B cell (primary cell): ENCODE measurements at regions of chr14 and their contacts with region 1.

Region 1: GRCh38 chr14:37150414-37150813 is 22.0 kb downstream of the SLC25A21 start:
- DNase-seq: no peak
- ATAC-seq: no peak
- H3K4me3 ChIP-seq: no peak overlapping the region
- H3K4me3 Mint-ChIP-seq: no peak overlapping the region
- H3K27ac ChIP-seq: no peak overlapping the region
- H3K27ac Mint-ChIP-seq: no peak overlapping the region
- H3K4me1 ChIP-seq: no peaks in the 10 kb centered on the region
- H3K4me1 Mint-ChIP-seq: no peaks in the 10 kb centered on the region
- H3K27me3 ChIP-seq: no peaks in the 10 kb centered on the region
- H3K27me3 Mint-ChIP-seq: no peaks in the 10 kb centered on the region
- CTCF ChIP-seq: peak; percentile 41

Region 2: GRCh38 chr14:36852981-36853691 is 297.3 kb before region 1 on chr14:
- CTCF ChIA-PET with region 1: no interaction called
- POLR2A ChIA-PET with region 1: no interaction called
- intact Hi-C with region 1: no loop called
- DNase-seq: no peak
- ATAC-seq: no peak
- H3K4me3 ChIP-seq: no peak overlapping the region
- H3K4me3 Mint-ChIP-seq: no peak overlapping the region
- H3K27ac ChIP-seq: no peak overlapping the region
- H3K27ac Mint-ChIP-seq: no peak overlapping the region
- H3K4me1 ChIP-seq: no peaks in the 10 kb centered on the region
- H3K4me1 Mint-ChIP-seq: no peaks in the 10 kb centered on the region
- H3K27me3 ChIP-seq: no peaks in the 10 kb centered on the region
- H3K27me3 Mint-ChIP-seq: no peaks in the 10 kb centered on the region
- CTCF ChIP-seq: no peak

Region 3: GRCh38 chr14:37139710-37140109 is 10.7 kb before region 1 on chr14:
- CTCF ChIA-PET with region 1: interaction called, 11 read pairs
- POLR2A ChIA-PET with region 1: no interaction called
- intact Hi-C with region 1: no loop called
- DNase-seq: no peak
- ATAC-seq: no peak
- H3K4me3 ChIP-seq: no peak overlapping the region
- H3K4me3 Mint-ChIP-seq: no peak overlapping the region
- H3K27ac ChIP-seq: no peak overlapping the region
- H3K27ac Mint-ChIP-seq: no peak overlapping the region
- H3K4me1 ChIP-seq: no peaks in the 10 kb centered on the region
- H3K4me1 Mint-ChIP-seq: no peaks in the 10 kb centered on the region
- H3K27me3 ChIP-seq: no peaks in the 10 kb centered on the region
- H3K27me3 Mint-ChIP-seq: no peaks in the 10 kb centered on the region
- CTCF ChIP-seq: no peak

Region 4: DNA sequence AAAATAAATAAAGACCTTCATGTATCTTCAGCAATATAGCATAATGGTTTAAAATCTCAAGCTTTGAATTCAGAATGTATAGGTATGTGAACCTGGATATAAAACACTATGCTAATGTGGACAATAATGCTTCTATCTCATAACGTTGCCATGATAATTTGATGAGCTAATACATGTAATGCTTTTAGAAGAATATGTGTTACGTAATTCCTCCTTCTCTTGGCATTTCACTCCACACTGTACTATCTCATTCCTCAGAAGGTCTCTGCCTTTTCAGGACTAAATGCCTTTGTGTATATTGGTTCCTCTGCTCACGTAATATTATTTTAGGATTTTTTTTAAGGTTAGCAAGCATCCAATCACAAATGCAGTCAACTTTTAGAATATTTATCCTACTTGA is 358.1 kb after region 1 on chr14:
- CTCF ChIA-PET with region 1: no interaction called
- POLR2A ChIA-PET with region 1: no interaction called
- intact Hi-C with region 1: no loop called
- DNase-seq: no peak
- ATAC-seq: no peak
- H3K4me3 ChIP-seq: no peak overlapping the region
- H3K4me3 Mint-ChIP-seq: no peak overlapping the region
- H3K27ac ChIP-seq: no peak overlapping the region
- H3K27ac Mint-ChIP-seq: no peak overlapping the region
- H3K4me1 ChIP-seq: no peaks in the 10 kb centered on the region
- H3K4me1 Mint-ChIP-seq: no peaks in the 10 kb centered on the region
- H3K27me3 ChIP-seq: no peaks in the 10 kb centered on the region
- H3K27me3 Mint-ChIP-seq: no peaks in the 10 kb centered on the region
- CTCF ChIP-seq: no peak